Calu3 (cell line): ENCODE measurements at regions of chr16 and their contacts with region 1.

Region 1: GRCh38 chr16:52408191-52408845 is 138.6 kb downstream of the TOX3 start:
- DNase-seq: peak; percentile 6
- H3K4me3 Mint-ChIP-seq: no peak overlapping the region
- H3K27ac Mint-ChIP-seq: peak overlapping the region; percentile 70
- H3K4me1 Mint-ChIP-seq: peaks cover 43% of the 10 kb centered on the region
- H3K27me3 Mint-ChIP-seq: no peaks in the 10 kb centered on the region
- CTCF ChIP-seq: no peak

Region 2: DNA sequence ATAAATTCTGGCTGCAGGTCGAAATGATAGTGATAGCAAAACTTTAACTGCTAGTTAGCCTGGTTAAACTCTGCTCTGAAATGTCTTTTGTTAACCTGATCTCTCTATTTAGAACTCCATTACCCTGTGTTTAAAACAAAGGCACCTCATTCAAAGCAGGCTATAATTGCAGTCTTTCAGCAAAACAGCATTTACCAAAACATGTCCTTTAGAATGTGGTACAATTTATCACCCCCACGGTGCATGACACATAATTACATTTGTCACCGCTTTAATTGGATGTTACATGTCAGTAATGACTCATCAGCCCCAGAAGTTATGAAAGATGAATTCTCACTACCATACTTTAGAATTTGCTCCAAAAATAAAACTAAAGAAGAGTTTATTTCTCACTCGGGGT is 156.8 kb before region 1 on chr16:
- CTCF ChIA-PET with region 1: no interaction called
- intact Hi-C with region 1: loop called (anchors 5 kb)
- DNase-seq: no peak
- H3K4me3 Mint-ChIP-seq: no peak overlapping the region
- H3K27ac Mint-ChIP-seq: no peak overlapping the region
- H3K4me1 Mint-ChIP-seq: peaks cover 55% of the 10 kb centered on the region
- H3K27me3 Mint-ChIP-seq: no peaks in the 10 kb centered on the region
- CTCF ChIP-seq: no peak

Region 3: DNA sequence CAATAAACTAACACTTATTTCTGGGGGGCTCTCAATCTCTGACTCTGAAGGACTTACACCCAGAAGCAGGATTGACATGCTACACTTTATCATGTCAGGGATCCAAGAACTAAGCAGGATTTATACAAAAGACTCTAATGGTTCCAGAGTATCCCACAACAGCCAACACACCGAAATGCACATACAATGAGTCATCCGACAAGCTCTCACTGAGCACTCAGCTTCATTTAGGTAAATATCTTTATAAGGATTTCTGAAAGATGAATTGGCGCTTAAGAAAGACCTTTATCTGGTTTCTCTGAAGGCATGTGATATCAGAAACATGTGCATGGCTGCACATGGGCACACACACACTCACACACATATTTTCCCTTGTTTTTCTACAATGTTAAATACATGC is 61.5 kb after region 1 on chr16:
- CTCF ChIA-PET with region 1: no interaction called
- intact Hi-C with region 1: loop called (anchors 2 kb)
- DNase-seq: peak; percentile 33
- H3K4me3 Mint-ChIP-seq: no peak overlapping the region
- H3K27ac Mint-ChIP-seq: peak overlapping the region; percentile 56
- H3K4me1 Mint-ChIP-seq: peaks cover 29% of the 10 kb centered on the region
- H3K27me3 Mint-ChIP-seq: no peaks in the 10 kb centered on the region
- CTCF ChIP-seq: no peak